Gastrocnemius medialis (tissue), 4 donors: ENCODE measurements at regions of chr22 and their contacts with region 1.

Region 1: GRCh38 chr22:46737976-46738646 is at the start of gene CERK:
- DNase-seq: peak; percentile 69 to 70
- ATAC-seq: peak; percentile 67 to 69
- H3K4me3 ChIP-seq: peak within 1 kb of the TSS; percentile 62 to 79 (median 72)
- H3K27ac ChIP-seq: peak within 1 kb of the TSS; percentile 87 to 94 (median 92)
- H3K4me1 ChIP-seq: peaks cover 63 to 66% of the 10 kb centered on the region in 2 donors
- H3K27me3 ChIP-seq: no peaks in the 10 kb centered on the region
- CTCF ChIP-seq: no peak
- POLR2A ChIP-seq: peak; percentile 69 to 78
- total RNA-seq, gene CERK: 32.7 to 38.7 (median 34.8) TPM

Region 2: GRCh38 chr22:46432164-46433068 is 305.7 kb before region 1 on chr22:
- in situ Hi-C with region 1: no loop called
- intact Hi-C with region 1: no loop called
- DNase-seq: no peak
- ATAC-seq: no peak
- H3K4me3 ChIP-seq: peak overlapping the region; percentile 25 to 36 (median 33)
- H3K27ac ChIP-seq: no peak overlapping the region
- H3K4me1 ChIP-seq: no peaks in the 10 kb centered on the region
- H3K27me3 ChIP-seq: peaks cover 0 to 9% (median 3%) of the 10 kb centered on the region in 3 donors
- CTCF ChIP-seq: no peak
- POLR2A ChIP-seq: no peak

Region 3: GRCh38 chr22:46754110-46754799 is 16.1 kb after region 1 on chr22:
- in situ Hi-C with region 1: no loop called
- intact Hi-C with region 1: loop called (anchors 2 kb)
- DNase-seq: peak; percentile 90 to 96
- ATAC-seq: peak; percentile 86 to 90
- H3K4me3 ChIP-seq: peak overlapping the region; percentile 21 to 41 (median 26)
- H3K27ac ChIP-seq: peak overlapping the region; percentile 91 to 99 (median 94)
- H3K4me1 ChIP-seq: peaks cover 47% of the 10 kb centered on the region in 2 donors
- H3K27me3 ChIP-seq: no peaks in the 10 kb centered on the region
- CTCF ChIP-seq: no peak
- POLR2A ChIP-seq: peak; percentile 76 to 83

Region 4: DNA sequence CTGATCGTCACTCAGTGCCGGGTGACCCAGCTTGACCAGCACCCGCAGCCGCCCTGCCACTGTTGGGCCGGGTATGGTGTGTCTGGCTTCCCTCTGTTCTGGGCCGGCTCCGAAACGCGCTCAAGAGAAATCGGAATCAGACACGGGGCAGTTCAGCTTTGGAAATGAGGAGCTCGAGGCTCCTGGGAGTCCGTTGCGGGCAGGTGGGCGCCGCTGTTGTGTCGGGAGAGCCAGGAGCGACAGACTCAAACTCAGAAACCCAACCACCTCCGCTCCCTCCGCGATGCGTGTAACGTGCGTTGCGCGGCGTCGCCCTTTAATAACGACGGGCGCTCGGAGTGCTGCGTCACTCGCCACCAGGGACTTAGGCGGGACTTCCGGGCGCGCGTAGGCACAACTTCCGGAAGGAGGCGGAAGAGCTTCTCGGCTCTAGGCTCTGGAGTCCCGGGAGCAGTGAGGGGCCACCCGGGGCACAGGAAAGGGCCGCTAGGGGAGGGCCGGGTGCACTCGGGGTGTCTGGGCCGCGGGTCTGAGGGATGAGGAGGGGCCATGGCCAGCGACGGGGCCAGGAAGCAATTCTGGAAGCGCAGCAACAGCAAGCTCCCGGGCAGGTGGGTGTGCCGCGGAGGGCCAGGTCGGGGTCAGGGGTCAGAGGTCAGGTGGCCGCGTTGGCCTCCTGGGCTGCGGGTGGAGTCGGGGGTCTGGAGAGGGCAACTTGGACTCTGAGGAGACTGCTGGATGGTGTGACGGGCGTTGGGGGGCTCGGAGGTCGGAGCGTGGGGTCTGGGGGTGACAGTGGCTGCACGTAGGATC is 24.3 kb after region 1 on chr22 and contains the start of gene TBC1D22A:
- in situ Hi-C with region 1: no loop called
- intact Hi-C with region 1: loop called (anchors 1 kb)
- DNase-seq: peak; percentile 90 to 93
- ATAC-seq: peak; percentile 92 to 94
- H3K4me3 ChIP-seq: peak within 1 kb of the TSS; percentile 88 to 98 (median 96)
- H3K27ac ChIP-seq: peak within 1 kb of the TSS; percentile 96 to 99 (median 98)
- H3K4me1 ChIP-seq: peaks cover 23 to 34% of the 10 kb centered on the region in 2 donors
- H3K27me3 ChIP-seq: no peaks in the 10 kb centered on the region
- CTCF ChIP-seq: peak in 2 of 5 experiments; percentile 20 to 32
- POLR2A ChIP-seq: peak; percentile 99
- total RNA-seq, gene TBC1D22A: 18.8 to 25.2 (median 23.1) TPM

Region 5: GRCh38 chr22:46798366-46799350 is 60.5 kb after region 1 on chr22:
- in situ Hi-C with region 1: no loop called
- intact Hi-C with region 1: loop called (anchors 1 kb)
- DNase-seq: peak in 1 of 2 donors; percentile 61
- ATAC-seq: peak; percentile 71 to 82
- H3K4me3 ChIP-seq: no peak overlapping the region
- H3K27ac ChIP-seq: no peak overlapping the region
- H3K4me1 ChIP-seq: peaks cover 0 to 4% of the 10 kb centered on the region in 2 donors
- H3K27me3 ChIP-seq: no peaks in the 10 kb centered on the region
- CTCF ChIP-seq: peak; percentile 84 to 94 (median 90)
- POLR2A ChIP-seq: no peak